PC-9 (cell line): ENCODE measurements at regions of chr13 and their contacts with region 1.

Region 1: GRCh38 chr13:109243311-109243951 is 543.0 kb downstream of the IRS2 start:
- DNase-seq: peak; percentile 75 to 96
- H3K4me3 ChIP-seq: peak overlapping the region; percentile 22; the same call in 1 of the 2 replicates
- H3K27ac ChIP-seq: peak overlapping the region; percentile 92
- H3K4me1 ChIP-seq: peaks cover 39% of the 10 kb centered on the region
- H3K27me3 ChIP-seq: no peaks in the 10 kb centered on the region
- CTCF ChIP-seq: no peak

Region 2: GRCh38 chr13:109180905-109181425 is 62.5 kb before region 1 on chr13:
- CTCF ChIA-PET with region 1: no interaction called
- POLR2A ChIA-PET with region 1: no interaction called
- intact Hi-C with region 1: loop called (anchors 2 kb)
- DNase-seq: peak; percentile 45 to 57
- H3K4me3 ChIP-seq: no peak overlapping the region
- H3K27ac ChIP-seq: peak overlapping the region; percentile 23; the same call in 1 of the 2 replicates
- H3K4me1 ChIP-seq: no peaks in the 10 kb centered on the region
- H3K27me3 ChIP-seq: no peaks in the 10 kb centered on the region
- CTCF ChIP-seq: no peak

Region 3: DNA sequence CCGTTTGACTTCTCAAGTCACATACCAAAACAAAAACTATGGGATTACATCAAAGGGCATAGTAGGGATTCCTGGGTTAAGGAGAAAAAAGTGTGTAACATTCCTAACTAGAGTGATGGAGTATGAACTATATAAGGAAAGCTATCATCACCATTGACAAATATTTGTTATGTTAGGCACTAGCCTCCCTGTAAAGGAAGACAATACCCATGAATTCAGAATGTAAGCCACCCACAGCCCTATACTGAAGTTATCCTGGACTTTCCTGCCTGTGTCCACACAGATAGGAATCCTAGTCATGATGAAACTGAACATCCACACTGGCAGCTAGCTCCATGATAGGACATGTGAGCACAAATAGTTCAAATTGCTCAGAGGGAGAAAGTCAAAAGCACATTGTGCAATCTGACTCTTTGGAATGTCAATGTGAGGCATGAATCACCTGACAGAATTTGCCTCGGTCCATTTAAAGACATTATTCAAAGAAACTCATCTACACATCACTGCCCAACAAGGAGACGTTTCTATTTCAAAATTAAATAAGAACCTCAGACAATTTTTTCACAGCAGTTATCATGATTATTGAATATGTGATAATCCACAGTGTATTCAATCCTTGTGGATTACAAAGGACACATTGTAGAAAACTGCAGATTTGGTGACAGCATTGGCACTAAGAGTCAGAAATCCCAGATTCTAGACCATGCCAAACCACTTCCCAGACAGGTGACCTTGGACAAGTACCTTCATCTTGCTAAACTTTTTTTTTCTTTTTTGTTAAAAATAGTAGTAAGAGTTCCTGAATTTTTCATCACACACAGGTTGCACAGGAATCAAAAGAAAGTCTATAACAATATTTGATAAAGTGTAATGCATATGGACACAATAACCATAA is 13.7 kb after region 1 on chr13:
- CTCF ChIA-PET with region 1: no interaction called
- POLR2A ChIA-PET with region 1: no interaction called
- intact Hi-C with region 1: loop called (anchors 1 kb)
- DNase-seq: peak; percentile 63 to 100
- H3K4me3 ChIP-seq: peak overlapping the region; percentile 10; the same call in 1 of the 2 replicates
- H3K27ac ChIP-seq: peak overlapping the region; percentile 97
- H3K4me1 ChIP-seq: peaks cover 57% of the 10 kb centered on the region
- H3K27me3 ChIP-seq: no peaks in the 10 kb centered on the region
- CTCF ChIP-seq: no peak